ENCODE measurements at regions of chr9 and their contacts with region 1.

Region 1: DNA sequence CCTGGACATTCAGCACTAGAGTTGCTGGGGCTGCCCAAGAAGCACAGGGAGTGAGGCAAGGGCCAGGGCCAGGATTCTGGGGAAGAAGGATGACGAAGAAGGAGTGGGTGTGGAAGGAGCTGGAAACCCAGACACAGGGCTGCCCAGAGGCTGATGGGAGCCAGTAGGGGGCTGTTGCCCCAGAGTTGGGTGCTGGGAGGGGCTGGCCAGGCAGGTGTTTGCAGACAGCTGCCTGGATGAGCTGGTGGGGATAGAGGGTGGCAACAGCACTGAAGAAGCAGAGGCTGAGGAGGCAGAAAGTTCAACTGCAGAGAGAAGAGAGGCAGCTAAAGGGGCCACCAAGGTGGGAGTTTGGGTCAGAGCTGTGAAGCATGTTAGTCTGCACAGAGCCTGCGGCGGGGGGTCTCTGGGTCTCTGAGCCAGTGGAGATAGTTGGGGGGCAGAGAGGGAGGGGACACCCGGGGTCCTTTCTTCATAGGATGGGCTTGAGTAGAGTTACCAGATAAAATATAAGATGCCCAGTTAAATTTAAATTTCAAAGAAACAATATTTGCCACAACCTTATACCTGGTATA is 2.5 kb upstream of the AQP7 start:
- DNase-seq: no peak
- ATAC-seq: peak; percentile 27; the same call in 1 of the 2 replicates
- H3K4me3 ChIP-seq: no peak overlapping the region
- H3K27ac ChIP-seq: no peak overlapping the region
- H3K4me1 ChIP-seq: no peaks in the 10 kb centered on the region
- H3K27me3 ChIP-seq: peaks cover 3% of the 10 kb centered on the region; the same call in 1 of the 2 replicates
- CTCF ChIP-seq: no peak
- POLR2A ChIP-seq: no peak
- RAD21 ChIP-seq: no peak

Region 2: GRCh38 chr9:33354651-33355211 is 50.1 kb before region 1 on chr9:
- CTCF ChIA-PET with region 1: no interaction called
- POLR2A ChIA-PET with region 1: no interaction called
- dilution Hi-C with region 1: no loop called
- in situ Hi-C with region 1: no loop called
- intact Hi-C with region 1: no loop called
- DNase-seq: peak; percentile 92
- ATAC-seq: peak; percentile 78
- H3K4me3 ChIP-seq: no peak overlapping the region
- H3K27ac ChIP-seq: peak overlapping the region; percentile 77; the same call in 1 of the 2 replicates
- H3K4me1 ChIP-seq: peaks cover 18% of the 10 kb centered on the region
- H3K27me3 ChIP-seq: no peaks in the 10 kb centered on the region
- CTCF ChIP-seq: no peak
- POLR2A ChIP-seq: no peak
- RAD21 ChIP-seq: no peak; the same call in 1 of the 2 replicates

Region 3: DNA sequence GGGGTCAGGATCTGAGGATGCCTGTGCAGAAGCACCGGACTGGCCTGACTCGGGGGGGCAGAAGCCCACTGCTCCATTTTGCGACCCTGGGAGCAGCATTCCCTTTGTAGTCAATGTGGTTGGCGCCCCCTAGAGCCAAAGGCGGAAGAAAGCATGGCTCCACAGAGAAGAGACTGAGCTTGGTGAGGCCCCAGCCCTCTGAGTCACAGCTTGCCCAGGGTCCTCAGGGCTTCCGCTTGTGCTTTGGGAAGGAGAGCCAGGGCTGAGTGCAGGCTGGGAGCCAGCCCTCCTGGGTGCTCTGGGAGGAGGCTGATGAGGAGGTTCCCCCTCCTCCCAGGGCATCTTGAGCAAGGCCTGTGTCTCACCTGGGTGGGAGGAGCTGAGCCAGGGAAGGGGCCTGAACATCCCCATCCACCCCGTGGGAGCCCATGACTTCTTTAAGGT is 48.0 kb after region 1 on chr9:
- CTCF ChIA-PET with region 1: interaction called, 3 read pairs
- POLR2A ChIA-PET with region 1: no interaction called
- dilution Hi-C with region 1: no loop called
- in situ Hi-C with region 1: no loop called
- intact Hi-C with region 1: loop called (anchors 5 kb)
- DNase-seq: peak; percentile 84
- ATAC-seq: peak; percentile 97
- H3K4me3 ChIP-seq: no peak overlapping the region
- H3K27ac ChIP-seq: no peak overlapping the region; the same call in 1 of the 2 replicates
- H3K4me1 ChIP-seq: peaks cover 3% of the 10 kb centered on the region
- H3K27me3 ChIP-seq: no peaks in the 10 kb centered on the region
- CTCF ChIP-seq: peak; percentile 86
- POLR2A ChIP-seq: no peak
- RAD21 ChIP-seq: peak; percentile 62

Region 4: GRCh38 chr9:33466565-33467495 is 62.0 kb after region 1 on chr9:
- CTCF ChIA-PET with region 1: no interaction called
- POLR2A ChIA-PET with region 1: no interaction called
- dilution Hi-C with region 1: no loop called
- in situ Hi-C with region 1: no loop called
- intact Hi-C with region 1: loop called (anchors 2 kb)
- DNase-seq: peak; percentile 24
- ATAC-seq: peak; percentile 91
- H3K4me3 ChIP-seq: no peak overlapping the region
- H3K27ac ChIP-seq: no peak overlapping the region
- H3K4me1 ChIP-seq: no peaks in the 10 kb centered on the region
- H3K27me3 ChIP-seq: no peaks in the 10 kb centered on the region
- CTCF ChIP-seq: peak; percentile 84
- POLR2A ChIP-seq: no peak
- RAD21 ChIP-seq: peak; percentile 84

Region 5: DNA sequence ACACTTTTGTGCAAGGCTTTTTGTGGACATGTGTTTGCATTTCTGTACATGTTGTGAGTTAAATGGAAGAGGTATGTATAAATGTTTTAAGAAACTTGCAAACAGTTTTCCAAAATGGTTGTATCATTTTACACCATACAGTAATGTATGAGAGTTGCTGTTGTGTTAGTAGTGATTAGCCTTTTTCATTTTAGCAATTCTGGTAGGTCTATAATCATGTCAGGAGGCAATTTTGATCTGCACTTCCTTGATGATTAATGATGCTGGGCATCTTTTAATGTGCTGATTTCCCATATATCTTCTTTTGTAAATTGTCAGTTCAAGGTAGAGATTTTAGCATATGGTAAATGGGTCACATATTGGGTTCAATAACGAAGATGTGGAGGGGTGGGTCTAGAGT is 206.5 kb after region 1 on chr9:
- CTCF ChIA-PET with region 1: no interaction called
- POLR2A ChIA-PET with region 1: no interaction called
- dilution Hi-C with region 1: no loop called
- in situ Hi-C with region 1: no loop called
- intact Hi-C with region 1: no loop called
- DNase-seq: no peak
- ATAC-seq: no peak
- H3K4me3 ChIP-seq: no peak overlapping the region
- H3K27ac ChIP-seq: no peak overlapping the region
- H3K4me1 ChIP-seq: 0 out of 2 replicates have a peak, but pooled peaks cover 3% of the 10 kb centered on the region
- H3K27me3 ChIP-seq: no peaks in the 10 kb centered on the region; the same call in none of the 2 replicates
- CTCF ChIP-seq: no peak
- POLR2A ChIP-seq: no peak
- RAD21 ChIP-seq: no peak

Region 6: GRCh38 chr9:33623658-33624586 is 219.0 kb after region 1 on chr9:
- CTCF ChIA-PET with region 1: no interaction called
- POLR2A ChIA-PET with region 1: no interaction called
- dilution Hi-C with region 1: no loop called
- in situ Hi-C with region 1: no loop called
- intact Hi-C with region 1: loop called (anchors 10 kb)
- DNase-seq: peak; percentile 67
- ATAC-seq: peak; percentile 78
- H3K4me3 ChIP-seq: no peak overlapping the region
- H3K27ac ChIP-seq: no peak overlapping the region
- H3K4me1 ChIP-seq: peaks cover 8% of the 10 kb centered on the region
- H3K27me3 ChIP-seq: peaks cover 3% of the 10 kb centered on the region
- CTCF ChIP-seq: peak; percentile 90
- POLR2A ChIP-seq: no peak
- RAD21 ChIP-seq: peak; percentile 89

Region 7: DNA sequence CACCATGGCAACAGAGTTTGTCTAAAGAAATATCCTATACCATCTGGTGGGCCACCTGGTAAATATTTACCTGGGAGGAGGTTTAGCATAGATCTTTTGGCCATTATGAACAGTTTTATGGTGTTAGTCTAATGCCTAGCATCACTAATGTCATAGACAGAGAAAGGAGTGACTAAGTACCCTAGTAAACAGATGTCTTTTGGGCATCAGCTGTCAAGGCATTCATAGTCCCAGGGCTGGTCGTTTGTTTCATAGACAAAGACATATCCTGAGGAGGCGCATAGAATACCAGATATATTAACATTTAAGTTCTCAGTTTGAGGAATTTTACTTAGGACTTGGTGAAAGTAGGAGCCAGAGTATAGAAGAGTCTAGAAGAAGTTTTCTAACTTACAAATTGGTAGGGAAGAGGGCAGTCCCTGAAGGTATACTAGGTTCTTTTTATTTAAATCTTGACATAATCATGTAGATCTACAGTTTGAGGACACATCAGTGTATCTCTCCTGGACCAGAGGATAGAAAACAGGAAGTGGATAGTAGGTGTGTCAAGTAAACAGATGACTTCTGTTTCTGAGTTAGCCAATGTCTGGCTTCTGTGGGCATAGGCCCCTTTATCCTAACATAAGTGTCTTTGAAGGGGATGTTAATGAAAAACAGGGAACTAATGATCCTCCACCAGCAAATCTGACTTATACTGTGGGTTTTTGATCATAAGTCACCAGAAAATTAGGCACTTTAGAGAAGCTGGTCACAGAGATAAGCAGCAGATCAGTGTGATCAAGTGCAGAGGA is 285.5 kb after region 1 on chr9:
- CTCF ChIA-PET with region 1: no interaction called
- POLR2A ChIA-PET with region 1: no interaction called
- dilution Hi-C with region 1: no loop called
- in situ Hi-C with region 1: no loop called
- intact Hi-C with region 1: no loop called
- DNase-seq: no peak
- ATAC-seq: no peak
- H3K4me3 ChIP-seq: no peak overlapping the region
- H3K27ac ChIP-seq: no peak overlapping the region
- H3K4me1 ChIP-seq: no peaks in the 10 kb centered on the region
- H3K27me3 ChIP-seq: peaks cover 17% of the 10 kb centered on the region
- CTCF ChIP-seq: no peak
- POLR2A ChIP-seq: no peak
- RAD21 ChIP-seq: no peak